ENCODE measurements at regions of chr1 and their contacts with region 1.

Region 1: GRCh38 chr1:33430692-33431593 is at the start of gene PHC2:
- DNase-seq: peak; percentile 70 to 92 (median 86)
- ATAC-seq: peak; percentile 97
- H3K4me3 ChIP-seq: peak within 1 kb of the TSS; percentile 18
- H3K4me3 Mint-ChIP-seq: peak within 1 kb of the TSS; percentile 57 to 83 (median 74)
- H3K27ac ChIP-seq: no peak within 1 kb of the TSS
- H3K27ac Mint-ChIP-seq: peak within 1 kb of the TSS in 4 of 9 donors; percentile 25 to 53 (median 44)
- H3K4me1 ChIP-seq: peaks cover 0 to 6% of the 10 kb centered on the region in 2 donors
- H3K4me1 Mint-ChIP-seq: peaks cover 0 to 5% (median 4%) of the 10 kb centered on the region in 7 donors
- H3K27me3 ChIP-seq: no peaks in the 10 kb centered on the region
- H3K27me3 Mint-ChIP-seq: peaks cover 0 to 43% (median 5%) of the 10 kb centered on the region in 5 donors
- total RNA-seq, gene PHC2: 31.9 to 45.5 (median 35.4) TPM

Region 2: DNA sequence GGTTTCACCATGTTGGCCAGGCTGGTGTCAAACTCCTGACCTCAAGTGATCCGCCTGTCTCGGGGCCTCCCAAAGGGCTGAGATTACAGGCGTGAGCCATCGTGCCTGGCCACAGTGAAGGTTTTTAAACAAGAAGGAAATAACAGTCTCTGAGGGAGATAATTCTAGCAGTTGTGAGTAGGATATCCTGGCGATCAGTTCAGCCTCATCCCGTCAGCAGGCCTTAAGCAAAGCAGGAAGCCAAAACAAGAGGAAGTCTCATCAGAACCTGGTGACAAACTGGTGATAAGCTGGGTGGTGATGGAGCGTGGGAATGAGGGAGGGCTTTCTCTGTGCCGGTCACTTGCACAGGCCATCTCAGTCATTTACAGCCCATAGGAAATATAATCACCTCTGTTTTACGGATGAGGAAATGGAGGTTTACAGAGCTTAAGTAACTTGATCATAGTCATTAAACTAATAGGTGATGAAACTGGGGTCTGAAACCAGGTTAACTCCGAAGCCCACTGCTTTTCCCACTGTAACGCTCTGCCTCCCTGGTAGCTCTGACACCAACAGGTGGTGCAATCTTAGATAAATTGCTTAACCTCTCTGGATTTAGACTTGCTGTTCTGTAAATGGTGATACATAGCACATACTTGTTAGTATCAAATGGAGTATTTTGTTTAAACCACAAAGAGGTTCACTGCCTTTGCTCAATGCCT is 69.3 kb before region 1 on chr1:
- CTCF ChIA-PET with region 1: no interaction called
- POLR2A ChIA-PET with region 1: no interaction called
- intact Hi-C with region 1: no loop called
- DNase-seq: no peak
- ATAC-seq: peak; percentile 75
- H3K4me3 ChIP-seq: no peak overlapping the region
- H3K4me3 Mint-ChIP-seq: no peak overlapping the region
- H3K27ac ChIP-seq: no peak overlapping the region
- H3K27ac Mint-ChIP-seq: peak overlapping the region in 2 of 9 donors; percentile 23 to 32
- H3K4me1 ChIP-seq: no peaks in the 10 kb centered on the region
- H3K4me1 Mint-ChIP-seq: peaks cover 0 to 9% (median 0%) of the 10 kb centered on the region in 7 donors
- H3K27me3 ChIP-seq: no peaks in the 10 kb centered on the region
- H3K27me3 Mint-ChIP-seq: peaks cover 0 to 5% (median 0%) of the 10 kb centered on the region in 5 donors

Region 3: DNA sequence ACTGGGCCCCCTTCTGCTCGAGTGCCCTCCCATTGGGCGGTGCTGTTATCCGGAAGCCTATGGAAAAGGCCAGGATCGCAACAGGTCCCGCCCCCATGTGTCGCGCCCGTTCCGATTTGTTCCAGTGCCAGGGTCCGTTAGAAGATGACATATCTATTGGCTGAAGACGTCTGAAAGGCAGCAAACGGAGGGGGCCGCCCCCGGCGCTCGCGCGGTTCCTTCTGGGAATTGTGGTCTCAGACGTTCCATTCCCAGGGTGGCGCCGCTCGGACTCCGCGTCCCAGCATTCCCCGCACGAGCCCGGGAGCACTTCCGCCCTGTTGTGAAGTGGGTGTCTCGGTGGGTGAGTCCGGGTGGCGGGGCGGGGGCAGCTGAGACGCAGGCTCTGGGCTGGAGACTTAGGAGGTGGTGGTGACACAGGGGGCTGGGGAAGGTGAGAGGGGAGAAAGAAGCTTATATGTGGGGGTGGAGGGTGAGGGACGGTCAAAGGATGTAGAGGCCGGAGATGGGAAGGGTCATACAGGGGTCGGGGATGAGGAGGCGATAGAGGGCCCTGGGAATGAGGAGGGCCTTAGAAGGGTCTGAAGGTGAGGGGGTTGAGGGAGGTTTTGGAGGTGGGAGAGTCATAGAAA is 41.5 kb after region 1 on chr1 and contains the start of gene ZSCAN20:
- CTCF ChIA-PET with region 1: no interaction called
- POLR2A ChIA-PET with region 1: no interaction called
- intact Hi-C with region 1: loop called in 1 of 2 experiments (anchors 1 kb)
- DNase-seq: peak; percentile 58 to 82 (median 79)
- ATAC-seq: peak; percentile 96
- H3K4me3 ChIP-seq: peak within 1 kb of the TSS; percentile 47
- H3K4me3 Mint-ChIP-seq: peak within 1 kb of the TSS; percentile 84 to 98 (median 92)
- H3K27ac ChIP-seq: peak within 1 kb of the TSS; percentile 60
- H3K27ac Mint-ChIP-seq: peak within 1 kb of the TSS; percentile 37 to 95 (median 76)
- H3K4me1 ChIP-seq: peaks cover 11 to 14% of the 10 kb centered on the region in 2 donors
- H3K4me1 Mint-ChIP-seq: peaks cover 20 to 39% (median 30%) of the 10 kb centered on the region in 7 donors
- H3K27me3 ChIP-seq: no peaks in the 10 kb centered on the region
- H3K27me3 Mint-ChIP-seq: no peaks in the 10 kb centered on the region
- total RNA-seq, gene ZSCAN20: 0.77 to 3.0 (median 2.6) TPM

Measured in naive thymus-derived CD4-positive, alpha-beta T cell (primary cell).